Right ventricle myocardium superior (tissue), 1 donor: ENCODE measurements at regions of chr6 and their contacts with region 1.

Region 1: GRCh38 chr6:32984605-32985389 is 16.4 kb downstream of the BRD2 start:
- DNase-seq: peak; percentile 94
- ATAC-seq: peak; percentile 85

Region 2: GRCh38 chr6:32933636-32934085 is 51.1 kb before region 1 on chr6:
- intact Hi-C with region 1: loop called (anchors 2 kb)
- DNase-seq: peak; percentile 81
- ATAC-seq: peak; percentile 77